ENCODE measurements at regions of chr1 and their contacts with region 1.

Region 1: DNA sequence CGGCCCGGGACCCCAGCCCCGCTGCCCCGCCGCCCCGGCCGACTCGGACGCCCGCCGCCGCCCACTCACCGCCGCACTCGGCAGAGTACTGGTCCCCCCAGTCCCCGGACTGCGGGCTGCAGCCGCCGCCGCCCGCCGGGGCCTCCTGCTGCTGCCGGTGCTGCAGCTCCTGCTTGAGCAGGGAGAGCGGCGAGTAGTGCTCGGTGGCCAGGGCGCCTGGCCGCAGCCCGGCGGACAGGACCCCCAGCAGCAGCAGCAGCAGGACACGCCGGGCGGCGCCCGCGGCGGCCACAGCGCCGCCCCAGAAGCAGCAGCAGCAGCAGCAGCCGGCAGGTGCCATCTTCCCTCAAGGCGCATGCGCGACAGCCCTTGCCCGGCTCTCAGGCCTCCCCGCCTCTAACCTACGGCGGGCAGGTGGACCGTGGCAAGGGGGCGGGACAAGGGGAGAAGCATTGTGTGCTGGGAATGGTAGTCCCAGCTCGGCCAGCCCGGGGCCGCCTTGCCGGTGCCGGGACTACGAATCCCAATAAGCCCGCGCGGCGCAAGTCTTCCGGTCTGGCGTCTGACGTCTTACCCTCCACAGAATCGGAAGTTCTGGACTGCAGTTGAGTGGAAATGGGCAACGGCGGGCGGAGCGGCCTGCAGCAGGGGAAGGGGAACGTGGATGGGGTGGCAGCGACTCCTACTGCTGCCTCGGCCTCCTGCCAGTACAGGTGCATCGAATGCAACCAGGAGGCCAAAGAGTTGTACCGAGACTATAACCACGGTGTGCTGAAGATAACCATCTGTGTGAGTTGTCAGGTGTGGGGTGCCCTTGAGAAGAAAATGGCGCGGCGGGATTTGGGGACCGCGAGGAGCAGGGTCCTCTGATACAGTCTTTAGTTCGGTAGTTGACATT is at the starts of genes ARV1 and TTC13:
- DNase-seq: peak; percentile 93
- ATAC-seq: peak; percentile 95
- H3K4me3 Mint-ChIP-seq: peak within 1 kb of the TSS; percentile 96
- H3K27ac Mint-ChIP-seq: peak within 1 kb of the TSS; percentile 99
- H3K4me1 Mint-ChIP-seq: peaks cover 29% of the 10 kb centered on the region
- H3K27me3 Mint-ChIP-seq: no peaks in the 10 kb centered on the region
- CTCF ChIP-seq: no peak
- total RNA-seq, gene ARV1: 13.1 and 13.7 TPM in 2 replicates
- total RNA-seq, gene TTC13: 30.9 and 35.4 TPM in 2 replicates

Region 2: GRCh38 chr1:229625915-229626831 is 1352.6 kb before region 1 on chr1 and contains the starts of genes TAF5L and URB2:
- CTCF ChIA-PET with region 1: no interaction called
- POLR2A ChIA-PET with region 1: no interaction called
- intact Hi-C with region 1: loop called (anchors 2 kb)
- DNase-seq: peak; percentile 86
- ATAC-seq: peak; percentile 92
- H3K4me3 Mint-ChIP-seq: peak within 1 kb of the TSS; percentile 99
- H3K27ac Mint-ChIP-seq: peak within 1 kb of the TSS; percentile 92
- H3K4me1 Mint-ChIP-seq: peaks cover 58% of the 10 kb centered on the region
- H3K27me3 Mint-ChIP-seq: no peaks in the 10 kb centered on the region
- CTCF ChIP-seq: no peak
- total RNA-seq, gene TAF5L: 22.0 and 24.4 TPM in 2 replicates
- total RNA-seq, gene URB2: 17.4 and 21.8 TPM in 2 replicates

Region 3: GRCh38 chr1:230867903-230868735 is 110.6 kb before region 1 on chr1 and contains the start of gene C1orf198:
- CTCF ChIA-PET with region 1: no interaction called
- POLR2A ChIA-PET with region 1: no interaction called
- intact Hi-C with region 1: loop called (anchors 2 kb)
- DNase-seq: peak; percentile 81
- ATAC-seq: peak; percentile 95
- H3K4me3 Mint-ChIP-seq: peak within 1 kb of the TSS; percentile 89
- H3K27ac Mint-ChIP-seq: peak within 1 kb of the TSS; percentile 56
- H3K4me1 Mint-ChIP-seq: peaks cover 13% of the 10 kb centered on the region
- H3K27me3 Mint-ChIP-seq: peaks cover 21% of the 10 kb centered on the region
- CTCF ChIP-seq: no peak
- total RNA-seq, gene C1orf198: 3.5 and 3.9 TPM in 2 replicates

Region 4: DNA sequence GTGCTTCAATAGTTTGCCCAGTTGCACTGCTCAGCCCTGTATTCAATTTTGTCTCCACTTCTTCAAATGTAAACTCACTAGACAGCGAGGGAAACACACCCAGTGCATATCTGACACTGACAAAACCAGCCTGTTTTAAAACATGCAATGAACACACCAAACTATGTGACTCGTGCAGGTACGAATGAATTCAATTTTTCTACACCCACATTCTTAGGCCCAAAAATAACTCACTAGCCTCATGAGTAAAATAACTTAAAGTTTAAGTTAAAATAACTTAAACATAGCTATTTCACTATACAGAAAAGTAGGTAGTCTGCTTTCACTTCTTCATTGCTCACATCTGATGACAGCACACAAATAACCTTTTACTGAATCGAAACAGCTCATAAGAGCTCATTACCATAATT is 21.2 kb before region 1 on chr1:
- CTCF ChIA-PET with region 1: interaction called, 4 read pairs
- POLR2A ChIA-PET with region 1: interaction called, 13 read pairs
- intact Hi-C with region 1: loop called (anchors 1 kb)
- DNase-seq: no peak
- ATAC-seq: peak; percentile 78
- H3K4me3 Mint-ChIP-seq: peak overlapping the region; percentile 66
- H3K27ac Mint-ChIP-seq: peak overlapping the region; percentile 77
- H3K4me1 Mint-ChIP-seq: peaks cover 39% of the 10 kb centered on the region
- H3K27me3 Mint-ChIP-seq: no peaks in the 10 kb centered on the region
- CTCF ChIP-seq: no peak

Region 5: DNA sequence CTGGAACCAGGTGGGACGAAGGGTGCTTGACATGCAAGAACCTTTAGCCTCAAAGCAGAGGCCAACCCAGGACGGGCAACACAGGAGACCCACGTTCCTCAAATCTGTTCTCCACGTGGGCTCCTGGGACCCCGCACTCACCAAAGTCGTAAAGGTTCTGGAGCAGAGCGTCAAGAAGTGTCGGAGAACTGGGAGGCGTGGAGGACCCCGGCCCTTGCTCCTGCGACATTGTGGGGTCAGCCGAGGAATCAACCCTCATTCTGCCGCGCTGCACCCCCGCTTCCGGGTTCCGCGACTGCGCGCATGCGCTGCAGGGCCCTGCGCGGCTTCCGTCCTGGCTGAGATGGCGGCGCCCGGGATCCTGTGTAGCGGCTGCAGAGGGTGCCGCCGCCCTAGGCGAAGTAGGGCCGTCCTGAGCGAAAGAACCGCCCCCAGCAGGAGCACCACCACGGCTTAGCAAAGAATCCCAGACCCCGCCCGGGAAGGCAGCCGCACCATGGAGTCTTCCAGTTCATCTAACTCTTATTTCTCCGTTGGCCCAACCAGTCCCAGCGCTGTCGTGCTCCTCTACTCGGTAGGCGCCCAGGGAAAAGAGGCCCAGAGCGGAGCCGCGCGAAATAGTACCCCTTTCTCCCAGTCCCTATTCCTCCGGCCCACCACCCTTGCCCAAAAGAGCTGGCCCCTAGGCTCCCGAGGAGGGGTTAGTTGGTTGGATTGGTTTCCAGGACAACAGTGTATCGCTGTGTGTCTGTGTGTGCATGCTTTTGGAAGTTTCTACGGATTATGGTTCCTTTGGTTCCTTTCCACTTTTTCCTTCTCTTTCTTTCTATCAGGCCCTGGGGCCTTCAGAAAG is 262.4 kb after region 1 on chr1 and contains the start of gene GNPAT:
- CTCF ChIA-PET with region 1: no interaction called
- POLR2A ChIA-PET with region 1: no interaction called
- intact Hi-C with region 1: loop called (anchors 1 kb)
- DNase-seq: peak; percentile 94
- ATAC-seq: peak; percentile 98
- H3K4me3 Mint-ChIP-seq: peak within 1 kb of the TSS; percentile 93
- H3K27ac Mint-ChIP-seq: peak within 1 kb of the TSS; percentile 94
- H3K4me1 Mint-ChIP-seq: peaks cover 58% of the 10 kb centered on the region
- H3K27me3 Mint-ChIP-seq: no peaks in the 10 kb centered on the region
- CTCF ChIP-seq: no peak
- total RNA-seq, gene GNPAT: 45.7 and 47.4 TPM in 2 replicates

Region 6: DNA sequence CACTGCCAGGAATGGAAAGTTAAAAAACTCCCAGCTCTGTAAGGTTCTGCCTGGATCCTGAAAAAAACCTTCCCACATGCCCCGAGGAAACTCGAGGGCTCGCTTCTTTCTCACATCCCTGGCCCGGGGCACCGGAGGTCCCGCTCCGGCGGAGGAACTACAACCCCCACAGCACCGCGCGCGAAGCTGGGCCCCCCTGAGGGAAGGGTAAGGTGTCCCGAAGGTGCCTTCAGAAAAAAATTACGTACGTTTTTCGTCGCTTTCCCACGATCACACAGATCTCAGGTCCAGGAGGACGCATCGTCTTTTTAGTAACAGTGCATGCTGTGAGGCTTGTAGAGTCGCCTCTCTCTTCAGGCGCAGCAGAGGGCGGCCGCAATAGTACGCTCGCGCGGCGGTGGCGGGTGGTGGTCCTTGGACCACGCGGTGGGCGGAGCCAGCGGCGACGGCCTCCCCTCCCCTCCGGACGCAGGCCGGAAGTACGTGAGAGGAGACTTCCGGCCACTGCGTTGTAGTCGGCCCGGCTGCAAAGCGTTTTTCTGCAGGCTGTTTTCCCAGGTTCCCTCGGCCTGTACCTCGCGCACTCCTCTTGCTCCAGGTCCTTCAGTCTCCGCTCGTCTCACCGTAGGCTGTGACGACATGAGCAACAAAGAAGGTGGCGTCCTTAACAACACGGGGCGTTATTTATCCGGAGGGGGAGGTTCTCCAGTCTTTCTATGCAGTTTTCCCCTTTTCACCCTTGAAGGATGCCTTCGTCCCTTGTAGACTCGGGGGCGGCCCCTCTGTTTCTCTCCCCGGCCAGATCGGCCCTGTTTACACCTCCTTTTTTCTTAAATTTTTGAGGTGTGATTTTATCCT is 549.7 kb after region 1 on chr1 and contains the start of gene TSNAX:
- CTCF ChIA-PET with region 1: no interaction called
- POLR2A ChIA-PET with region 1: no interaction called
- intact Hi-C with region 1: loop called (anchors 1 kb)
- DNase-seq: peak; percentile 89
- ATAC-seq: peak; percentile 95
- H3K4me3 Mint-ChIP-seq: peak within 1 kb of the TSS; percentile 99
- H3K27ac Mint-ChIP-seq: peak within 1 kb of the TSS; percentile 100
- H3K4me1 Mint-ChIP-seq: peaks cover 33% of the 10 kb centered on the region
- H3K27me3 Mint-ChIP-seq: no peaks in the 10 kb centered on the region
- CTCF ChIP-seq: no peak
- total RNA-seq, gene TSNAX: 30.0 and 38.7 TPM in 2 replicates

Measured in activated B cell treated with CpG ODN at 0.5 μM for 24 hours (primary cell).